Right lobe of liver (tissue), 6 donors: ENCODE measurements at regions of chr1 and their contacts with region 1.

Region 1: DNA sequence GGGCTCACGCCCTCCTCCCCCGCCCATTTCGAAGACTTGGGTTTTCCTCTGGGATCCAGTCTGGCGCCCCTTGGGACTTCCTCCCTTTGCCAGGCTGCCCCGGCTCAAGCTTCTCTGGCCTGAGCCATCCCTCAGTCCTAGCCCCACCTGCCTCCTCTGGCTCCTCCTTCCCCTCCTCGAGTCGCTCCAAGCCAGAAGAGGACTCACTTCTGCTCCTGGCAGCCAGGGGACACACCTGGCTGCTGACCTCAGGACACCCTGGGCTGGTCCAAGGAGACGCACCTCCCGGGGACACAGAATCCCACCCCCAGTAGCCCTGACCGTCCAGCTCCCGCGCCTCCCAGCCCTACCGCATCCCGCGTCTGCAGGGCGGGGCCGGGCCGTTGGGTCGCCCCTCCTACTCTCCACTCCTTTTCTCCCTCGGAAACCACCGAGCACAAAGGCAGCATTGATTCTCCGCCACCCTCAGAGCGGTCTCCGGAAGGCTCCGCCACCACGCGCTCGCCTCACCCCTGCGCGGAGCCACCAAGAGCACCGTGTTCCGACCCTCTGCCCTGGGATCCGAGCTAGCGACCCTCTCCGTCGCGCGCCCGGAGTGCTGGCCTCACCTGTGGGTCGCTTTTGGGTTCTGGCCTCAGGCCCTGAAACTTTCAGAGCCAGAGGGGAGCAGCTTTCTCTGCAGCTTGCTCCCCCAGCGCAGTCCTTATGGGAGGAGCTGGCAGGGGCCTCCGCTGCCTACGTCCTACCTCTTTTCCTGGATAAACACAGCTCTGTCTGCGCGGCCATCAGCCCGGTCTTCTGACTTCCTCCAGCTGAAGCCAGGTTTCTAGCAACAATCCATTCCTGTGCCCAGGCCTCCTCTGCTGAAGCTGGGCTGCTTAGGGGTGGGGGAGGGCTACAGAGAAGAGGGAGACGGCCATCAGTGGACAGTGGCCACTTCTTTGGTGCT is at the start of gene C2CD4D:
- DNase-seq: no peak
- ATAC-seq: peak; percentile 8 to 36 (median 26)
- H3K4me3 ChIP-seq: peak within 1 kb of the TSS; percentile 42 to 57 (median 48)
- H3K27ac ChIP-seq: no peak within 1 kb of the TSS
- H3K4me1 ChIP-seq: peaks cover 0 to 39% (median 11%) of the 10 kb centered on the region in 4 donors
- H3K27me3 ChIP-seq: no peaks in the 10 kb centered on the region
- CTCF ChIP-seq: no peak
- POLR2A ChIP-seq: peak; percentile 27
- total RNA-seq, gene C2CD4D: not detected

Region 2: DNA sequence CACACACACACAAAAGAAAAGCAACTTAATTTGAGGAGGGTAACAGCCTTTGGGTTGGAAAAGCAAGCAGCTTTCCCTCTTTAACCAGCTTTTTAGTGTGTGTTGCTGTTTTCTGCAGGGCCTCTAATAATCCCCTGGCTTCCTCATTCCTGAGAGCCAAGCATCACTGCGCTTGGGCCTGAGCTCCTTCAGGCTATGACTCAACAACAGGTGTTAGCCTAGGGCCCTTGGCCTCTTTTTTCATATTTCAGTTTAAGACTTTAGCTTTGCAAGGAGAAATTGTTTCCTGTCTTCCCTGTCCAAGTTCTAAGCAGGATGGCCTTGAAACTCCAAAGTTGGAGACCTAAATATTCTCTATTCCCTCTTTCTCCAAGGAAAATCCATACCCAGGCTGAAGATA is 254.1 kb before region 1 on chr1:
- intact Hi-C with region 1: loop called in 1 of 2 experiments (anchors 10 kb)
- DNase-seq: no peak
- ATAC-seq: no peak
- H3K4me3 ChIP-seq: no peak overlapping the region
- H3K27ac ChIP-seq: no peak overlapping the region
- H3K4me1 ChIP-seq: no peaks in the 10 kb centered on the region
- H3K27me3 ChIP-seq: no peaks in the 10 kb centered on the region
- CTCF ChIP-seq: no peak
- POLR2A ChIP-seq: no peak